Dorsolateral prefrontal cortex (tissue), 120 donors: ENCODE measurements at regions of chr9 and their contacts with region 1.

Region 1: GRCh38 chr9:18255158-18255629 is 218.8 kb upstream of the ADAMTSL1 start:
- DNase-seq: peak; percentile 56 to 84 (median 76)
- H3K4me3 ChIP-seq: peak overlapping the region in 1 of 59 donors; percentile 3
- H3K27ac ChIP-seq: no peak overlapping the region
- H3K27me3 ChIP-seq: peaks cover 0 to 6% (median 0%) of the 10 kb centered on the region in 45 donors
- CTCF ChIP-seq: peak; percentile 89 to 99 (median 96)

Region 2: GRCh38 chr9:18268381-18268780 is 13.2 kb after region 1 on chr9:
- intact Hi-C with region 1: no loop called
- DNase-seq: no peak
- H3K4me3 ChIP-seq: no peak overlapping the region
- H3K27ac ChIP-seq: no peak overlapping the region
- H3K27me3 ChIP-seq: no peaks in the 10 kb centered on the region
- CTCF ChIP-seq: no peak

Region 3: GRCh38 chr9:18343784-18344183 is 88.6 kb after region 1 on chr9:
- intact Hi-C with region 1: loop called in 1 of 2 experiments (anchors 5 kb)
- DNase-seq: no peak
- H3K4me3 ChIP-seq: no peak overlapping the region
- H3K27ac ChIP-seq: no peak overlapping the region
- H3K27me3 ChIP-seq: no peaks in the 10 kb centered on the region
- CTCF ChIP-seq: no peak

Region 4: DNA sequence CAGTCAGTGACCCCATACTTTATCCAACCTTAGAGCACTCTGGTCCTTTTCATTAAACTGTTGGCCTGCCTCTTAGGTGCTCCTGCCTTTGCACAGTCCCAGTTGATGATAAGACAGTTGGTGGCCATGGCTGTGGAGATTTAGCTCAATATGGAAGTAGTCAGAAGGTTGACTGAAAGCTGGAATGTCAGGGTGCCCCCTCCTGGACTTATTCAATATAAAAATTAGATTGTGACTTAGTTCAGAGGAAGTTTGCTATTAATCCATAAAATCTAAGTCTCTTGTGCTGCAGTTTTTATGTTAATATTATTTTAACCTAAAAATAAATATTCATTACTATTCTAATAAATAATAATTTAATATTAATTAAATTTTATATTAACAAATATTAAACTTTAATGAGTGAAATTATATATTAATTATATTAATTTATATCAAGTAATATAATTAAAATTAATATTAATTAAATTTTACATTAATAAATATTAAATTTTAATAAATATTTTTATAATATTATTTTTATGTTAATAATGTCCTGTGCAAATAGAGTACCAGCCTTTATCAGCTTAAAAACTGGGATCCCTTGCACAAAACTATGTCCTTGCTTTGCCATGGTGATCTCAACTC is 141.0 kb after region 1 on chr9:
- intact Hi-C with region 1: loop called in 1 of 2 experiments (anchors 5 kb)
- DNase-seq: no peak
- H3K4me3 ChIP-seq: no peak overlapping the region
- H3K27ac ChIP-seq: no peak overlapping the region
- H3K27me3 ChIP-seq: no peaks in the 10 kb centered on the region
- CTCF ChIP-seq: peak in 20 of 56 donors; percentile 9 to 53 (median 28)

Region 5: DNA sequence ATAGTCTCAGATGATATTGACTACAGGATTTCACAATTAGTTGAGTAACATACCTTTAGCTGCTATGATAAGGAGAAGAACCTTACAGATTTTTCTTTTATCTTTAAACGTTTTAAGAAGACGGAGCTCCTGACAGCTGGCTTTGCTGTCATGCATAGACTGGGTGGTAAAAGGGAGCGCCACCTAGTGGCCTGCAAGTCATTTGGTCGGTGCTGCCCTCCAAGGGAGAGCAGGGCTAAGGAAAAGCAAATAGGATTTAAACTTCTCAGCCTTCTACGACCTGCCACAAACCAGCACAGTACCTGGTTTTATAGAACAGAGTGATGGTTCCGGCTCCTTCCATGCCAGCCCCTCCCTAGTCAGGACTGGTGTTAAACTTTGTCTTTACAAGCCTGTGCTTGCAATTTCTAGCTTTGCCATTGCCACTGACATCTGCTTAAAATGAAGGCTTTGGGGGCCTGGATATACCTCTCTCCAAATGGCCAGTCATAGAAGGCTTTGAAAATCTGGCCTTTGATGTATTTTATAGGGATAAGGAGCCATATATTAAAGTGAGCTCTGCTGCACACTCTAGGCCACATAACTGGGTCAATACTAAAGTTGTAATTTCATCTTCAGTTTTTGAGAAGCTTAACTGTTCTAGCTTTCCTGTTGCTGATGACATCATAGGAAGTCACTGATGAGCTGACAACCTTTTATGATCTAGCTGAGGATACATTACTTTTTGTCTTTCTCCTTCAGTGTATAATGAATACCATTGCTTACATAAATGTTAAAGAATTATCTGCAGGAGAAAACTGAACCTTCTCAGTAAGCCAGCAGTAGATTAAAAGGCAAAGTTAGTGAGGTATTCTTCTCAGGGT is 187.7 kb after region 1 on chr9:
- intact Hi-C with region 1: loop called (anchors 2 to 10 kb)
- DNase-seq: peak; percentile 56 to 80 (median 72)
- H3K4me3 ChIP-seq: peak overlapping the region in 1 of 59 donors; percentile 12
- H3K27ac ChIP-seq: no peak overlapping the region
- H3K27me3 ChIP-seq: no peaks in the 10 kb centered on the region
- CTCF ChIP-seq: peak; percentile 67 to 97 (median 92)

Region 6: DNA sequence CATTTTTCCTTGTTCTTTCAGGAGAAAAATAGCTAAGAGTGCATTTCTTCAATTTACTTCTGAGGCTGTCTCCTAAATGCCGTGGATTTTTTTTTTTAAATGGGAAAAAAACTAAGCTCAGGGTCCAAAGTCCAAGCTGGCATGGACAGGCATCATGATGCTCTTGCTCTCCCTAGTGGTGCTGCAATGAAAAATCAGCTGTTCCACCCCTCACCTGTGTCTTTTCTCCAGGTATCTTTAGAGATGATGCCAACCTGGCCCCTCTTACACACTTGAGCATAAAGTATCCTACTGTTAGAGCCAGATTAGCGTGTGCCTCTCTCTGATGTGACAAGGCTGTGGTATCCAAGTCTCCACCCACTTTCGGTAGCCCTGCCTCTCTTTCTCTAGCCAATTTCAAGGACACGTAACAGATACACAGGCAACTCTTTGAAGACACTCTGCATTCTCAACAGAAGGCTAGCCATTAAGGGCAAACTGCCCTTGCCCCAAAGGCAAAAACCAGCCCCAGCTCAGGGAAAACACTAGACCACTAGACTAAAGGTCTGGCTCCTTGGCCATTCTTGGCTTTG is 569.0 kb after region 1 on chr9:
- intact Hi-C with region 1: loop called in 1 of 2 experiments (anchors 5 kb)
- DNase-seq: no peak
- H3K4me3 ChIP-seq: no peak overlapping the region
- H3K27ac ChIP-seq: no peak overlapping the region
- H3K27me3 ChIP-seq: no peaks in the 10 kb centered on the region
- CTCF ChIP-seq: peak in 43 of 56 donors; percentile 14 to 56 (median 32)

Region 7: GRCh38 chr9:19018201-19018600 is 763.0 kb after region 1 on chr9:
- intact Hi-C with region 1: loop called in 1 of 2 experiments (anchors 5 kb)
- DNase-seq: no peak
- H3K4me3 ChIP-seq: no peak overlapping the region
- H3K27ac ChIP-seq: no peak overlapping the region
- H3K27me3 ChIP-seq: peaks cover 0 to 6% (median 0%) of the 10 kb centered on the region in 45 donors
- CTCF ChIP-seq: no peak

Region 8: GRCh38 chr9:19028835-19029451 is 773.7 kb after region 1 on chr9:
- intact Hi-C with region 1: loop called (anchors 5 kb)
- DNase-seq: peak in 2 of 10 donors; percentile 31 to 39
- H3K4me3 ChIP-seq: peak overlapping the region in 5 of 59 donors; percentile 4 to 52 (median 15)
- H3K27ac ChIP-seq: no peak overlapping the region
- H3K27me3 ChIP-seq: peaks cover 0 to 9% (median 0%) of the 10 kb centered on the region in 45 donors
- CTCF ChIP-seq: peak; percentile 71 to 93 (median 85)

Region 9: DNA sequence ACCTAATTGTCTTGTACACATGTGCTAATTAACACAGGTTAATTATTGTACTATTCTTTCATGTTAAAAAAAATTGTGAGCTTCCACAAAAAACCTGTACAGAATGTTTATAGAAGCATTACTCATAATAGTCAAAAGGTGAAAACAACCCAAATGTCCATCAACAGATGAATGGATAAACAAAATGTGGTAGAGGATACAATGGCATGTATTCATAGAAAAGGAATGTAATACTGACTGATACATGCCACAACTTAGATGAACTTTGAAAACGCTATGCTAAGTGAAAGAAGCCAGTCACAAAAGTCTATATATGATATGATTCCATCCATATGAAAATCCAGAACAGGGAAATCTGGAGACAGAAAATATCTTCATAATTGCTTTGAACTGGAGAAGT is 819.6 kb after region 1 on chr9:
- intact Hi-C with region 1: no loop called
- DNase-seq: no peak
- H3K4me3 ChIP-seq: no peak overlapping the region
- H3K27ac ChIP-seq: no peak overlapping the region
- H3K27me3 ChIP-seq: no peaks in the 10 kb centered on the region
- CTCF ChIP-seq: no peak